ENCODE measurements at regions of chr3 and their contacts with region 1.

Region 1: GRCh38 chr3:120908030-120908794 is at the start of gene STXBP5L:
- DNase-seq: peak; percentile 90
- H3K4me3 ChIP-seq: peak within 1 kb of the TSS; percentile 55 to 64 (median 57)
- H3K27ac ChIP-seq: peak within 1 kb of the TSS; percentile 29 to 81 (median 76)
- H3K4me1 ChIP-seq: peaks cover 0 to 14% (median 11%) of the 10 kb centered on the region in 4 donors
- H3K27me3 ChIP-seq: no peaks in the 10 kb centered on the region
- CTCF ChIP-seq: no peak
- EP300 ChIP-seq: no peak
- POLR2A ChIP-seq: peak in 1 of 2 donors; percentile 37
- total RNA-seq, gene STXBP5L: 11.4 to 14.3 (median 12.8) TPM

Region 2: GRCh38 chr3:120596116-120596852 is 311.9 kb before region 1 on chr3 and contains the start of gene NDUFB4:
- intact Hi-C with region 1: loop called (anchors 5 kb)
- DNase-seq: peak; percentile 99
- H3K4me3 ChIP-seq: peak within 1 kb of the TSS; percentile 62 to 88 (median 76)
- H3K27ac ChIP-seq: peak within 1 kb of the TSS; percentile 89 to 94 (median 90)
- H3K4me1 ChIP-seq: peaks cover 0 to 46% (median 38%) of the 10 kb centered on the region in 4 donors
- H3K27me3 ChIP-seq: no peaks in the 10 kb centered on the region
- CTCF ChIP-seq: no peak
- EP300 ChIP-seq: peak in 1 of 4 donors; percentile 50
- POLR2A ChIP-seq: peak; percentile 78 to 86
- total RNA-seq, gene NDUFB4: 72.3 to 148 (median 113) TPM

Region 3: DNA sequence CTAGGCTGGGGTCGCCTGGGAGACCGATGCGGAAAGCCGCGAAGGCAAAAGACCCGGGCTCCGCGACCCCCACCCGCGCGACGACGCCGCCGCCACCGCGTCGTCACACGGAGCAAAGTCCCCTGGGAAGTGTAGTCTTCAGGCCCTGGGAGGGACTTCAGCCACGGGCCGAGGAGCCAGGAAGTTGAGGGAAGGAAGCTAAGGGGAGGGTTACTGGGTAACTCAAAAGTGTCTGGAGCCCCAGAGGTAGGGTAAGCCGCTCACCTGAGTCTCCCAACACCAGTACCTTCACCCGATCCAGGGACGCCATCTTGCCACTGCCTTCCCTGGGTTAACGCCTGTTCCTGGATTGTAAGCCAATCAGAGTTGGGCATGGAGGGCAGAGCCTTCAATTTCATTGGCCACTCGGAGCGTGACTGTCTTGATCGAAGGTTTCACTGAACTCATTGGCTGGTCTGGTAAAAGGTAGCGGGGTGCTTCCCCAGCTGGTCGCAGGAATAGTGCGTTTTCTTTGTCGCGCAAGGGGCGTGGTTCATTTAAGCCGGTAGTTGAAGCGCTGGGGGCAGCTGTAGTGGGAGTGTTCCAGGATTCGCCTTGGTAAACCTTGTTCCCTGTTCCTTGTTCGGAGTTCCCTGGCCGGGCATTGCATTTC is 165.9 kb before region 1 on chr3 and contains the starts of genes GTF2E1 and RABL3:
- intact Hi-C with region 1: loop called (anchors 1 kb)
- DNase-seq: peak; percentile 98
- H3K4me3 ChIP-seq: peak within 1 kb of the TSS; percentile 79 to 94 (median 87)
- H3K27ac ChIP-seq: peak within 1 kb of the TSS; percentile 89 to 93 (median 92)
- H3K4me1 ChIP-seq: peaks cover 0 to 19% (median 10%) of the 10 kb centered on the region in 4 donors
- H3K27me3 ChIP-seq: no peaks in the 10 kb centered on the region
- CTCF ChIP-seq: no peak
- EP300 ChIP-seq: peak in 1 of 4 donors; percentile 27
- POLR2A ChIP-seq: peak; percentile 45 to 49
- total RNA-seq, gene GTF2E1: 6.9 to 12.5 (median 10.3) TPM
- total RNA-seq, gene RABL3: 9.4 to 13.2 (median 12.6) TPM